B cell (primary cell): ENCODE measurements at regions of chr9 and their contacts with region 1.

Region 1: DNA sequence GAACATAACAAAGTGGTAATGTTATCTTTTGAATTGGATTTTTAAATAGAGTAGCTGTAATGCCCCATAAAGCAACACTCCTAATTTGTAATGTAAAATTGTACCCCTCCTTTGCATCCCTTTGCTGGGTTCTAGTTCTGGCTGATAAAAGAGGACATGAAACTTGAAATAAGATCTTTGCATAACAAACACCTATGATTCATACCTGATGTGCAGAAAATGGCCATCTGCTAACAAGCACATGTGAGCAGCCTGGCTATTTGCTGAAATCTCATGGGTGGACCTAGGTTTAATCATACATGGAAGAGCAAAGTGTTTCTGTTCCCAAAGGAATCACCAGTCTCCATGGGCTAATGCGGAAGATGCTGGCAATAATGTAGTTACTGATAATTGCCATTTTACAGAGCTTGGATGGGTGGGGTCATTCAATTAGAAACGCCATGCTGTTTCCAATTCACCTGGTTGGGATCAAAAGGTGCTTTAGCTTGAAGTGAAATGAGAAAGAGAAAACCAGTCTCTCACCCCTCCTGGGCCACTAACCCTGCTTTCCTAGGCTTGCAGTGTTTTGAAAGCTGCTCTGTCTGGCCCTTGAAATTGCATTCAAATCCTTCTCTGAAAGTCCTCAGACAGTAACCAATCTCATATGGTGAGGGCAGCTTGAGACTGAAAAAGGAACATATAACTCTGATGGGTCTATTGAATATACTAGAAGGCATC is 585.1 kb downstream of the TLE4 start:
- DNase-seq: peak; percentile 23
- ATAC-seq: peak; percentile 73
- H3K4me3 ChIP-seq: no peak overlapping the region
- H3K4me3 Mint-ChIP-seq: peak overlapping the region; percentile 61
- H3K27ac ChIP-seq: peak overlapping the region; percentile 19 to 40
- H3K27ac Mint-ChIP-seq: peak overlapping the region; percentile 57
- H3K4me1 ChIP-seq: peaks cover 22 to 24% of the 10 kb centered on the region in 2 donors
- H3K4me1 Mint-ChIP-seq: peaks cover 42% of the 10 kb centered on the region
- H3K27me3 ChIP-seq: no peaks in the 10 kb centered on the region
- H3K27me3 Mint-ChIP-seq: no peaks in the 10 kb centered on the region
- CTCF ChIP-seq: no peak

Region 2: DNA sequence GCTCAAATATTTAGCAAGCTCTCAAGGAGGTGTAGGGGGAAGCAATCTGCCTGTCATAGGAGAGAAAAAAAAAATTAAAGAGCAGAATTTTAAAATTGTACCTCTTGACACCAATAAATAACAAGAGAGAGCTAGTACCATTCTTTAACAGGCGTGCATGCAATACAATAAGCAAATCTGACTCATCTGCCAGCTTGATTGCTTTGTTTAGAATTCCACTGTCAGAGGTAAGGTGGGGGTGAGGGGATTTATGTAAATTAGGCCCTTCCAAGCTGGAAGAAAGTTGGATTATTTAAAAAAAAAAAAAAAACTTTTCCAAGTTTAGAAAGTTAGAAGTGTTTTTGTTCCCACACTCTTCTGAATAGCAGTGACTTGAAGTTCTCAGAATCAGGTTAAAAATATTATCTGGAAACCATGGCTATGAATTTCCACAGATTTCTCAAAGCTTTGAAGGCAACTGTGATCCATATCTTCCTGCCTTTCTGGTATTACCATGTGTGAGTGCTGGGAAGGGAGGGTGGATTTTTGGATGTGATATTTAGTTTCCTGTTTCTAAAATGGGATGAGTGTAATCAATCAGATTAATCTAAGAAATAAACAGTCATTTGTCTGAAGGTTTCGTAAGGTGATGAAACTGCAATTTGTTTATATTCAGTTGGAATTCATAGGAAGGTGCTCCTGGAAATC is 107.7 kb before region 1 on chr9:
- CTCF ChIA-PET with region 1: no interaction called
- POLR2A ChIA-PET with region 1: no interaction called
- intact Hi-C with region 1: no loop called
- DNase-seq: no peak
- ATAC-seq: no peak
- H3K4me3 ChIP-seq: no peak overlapping the region
- H3K4me3 Mint-ChIP-seq: no peak overlapping the region
- H3K27ac ChIP-seq: no peak overlapping the region
- H3K27ac Mint-ChIP-seq: no peak overlapping the region
- H3K4me1 ChIP-seq: no peaks in the 10 kb centered on the region
- H3K4me1 Mint-ChIP-seq: no peaks in the 10 kb centered on the region
- H3K27me3 ChIP-seq: no peaks in the 10 kb centered on the region
- H3K27me3 Mint-ChIP-seq: no peaks in the 10 kb centered on the region
- CTCF ChIP-seq: no peak

Region 3: GRCh38 chr9:80085668-80086067 is 71.2 kb before region 1 on chr9:
- CTCF ChIA-PET with region 1: no interaction called
- POLR2A ChIA-PET with region 1: no interaction called
- intact Hi-C with region 1: loop called (anchors 10 kb)
- DNase-seq: no peak
- ATAC-seq: no peak
- H3K4me3 ChIP-seq: peak overlapping the region in 1 of 5 experiments; percentile 17
- H3K4me3 Mint-ChIP-seq: no peak overlapping the region
- H3K27ac ChIP-seq: peak overlapping the region in 1 of 2 donors; percentile 54
- H3K27ac Mint-ChIP-seq: no peak overlapping the region
- H3K4me1 ChIP-seq: peaks cover 23 to 37% of the 10 kb centered on the region in 2 donors
- H3K4me1 Mint-ChIP-seq: peaks cover 38% of the 10 kb centered on the region
- H3K27me3 ChIP-seq: no peaks in the 10 kb centered on the region
- H3K27me3 Mint-ChIP-seq: no peaks in the 10 kb centered on the region
- CTCF ChIP-seq: no peak